PC-3 (cell line): ENCODE measurements at regions of chr10 and their contacts with region 1.

Region 1: DNA sequence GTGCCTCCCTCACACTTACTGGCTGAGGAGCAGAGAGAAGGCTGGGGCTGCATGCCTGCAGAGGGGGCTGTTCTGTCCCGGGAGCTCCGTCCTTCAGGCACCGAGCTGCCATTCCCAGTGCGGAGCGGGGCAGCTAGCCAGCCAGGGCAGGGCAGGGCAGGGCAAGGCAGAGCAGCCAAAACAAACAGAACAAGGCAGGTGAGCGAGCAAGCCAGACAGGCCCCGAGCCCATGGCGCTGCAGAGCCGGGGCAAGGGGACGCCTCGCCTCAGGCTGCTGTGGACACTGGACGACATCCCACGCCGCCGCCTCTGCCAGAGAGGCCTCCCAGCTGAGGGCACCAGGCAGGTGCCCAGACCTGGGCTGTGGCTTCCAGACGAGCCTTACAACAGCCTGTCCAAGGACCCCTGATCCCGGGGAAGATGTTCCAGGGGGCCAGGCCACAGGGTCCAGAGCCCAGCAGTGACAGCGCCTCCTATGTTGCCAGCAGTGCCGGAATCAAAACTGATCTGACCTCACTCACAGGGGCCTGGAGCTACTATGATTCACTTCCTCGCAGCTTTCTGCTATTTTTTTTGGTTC is 8.2 kb upstream of the NDST2 start:
- DNase-seq: peak; percentile 97
- ATAC-seq: peak; percentile 94
- H3K4me3 ChIP-seq: peak overlapping the region; percentile 33
- H3K27ac ChIP-seq: peak overlapping the region; percentile 66
- H3K4me1 ChIP-seq: peaks cover 22% of the 10 kb centered on the region
- H3K27me3 ChIP-seq: no peaks in the 10 kb centered on the region
- CTCF ChIP-seq: peak; percentile 89

Region 2: DNA sequence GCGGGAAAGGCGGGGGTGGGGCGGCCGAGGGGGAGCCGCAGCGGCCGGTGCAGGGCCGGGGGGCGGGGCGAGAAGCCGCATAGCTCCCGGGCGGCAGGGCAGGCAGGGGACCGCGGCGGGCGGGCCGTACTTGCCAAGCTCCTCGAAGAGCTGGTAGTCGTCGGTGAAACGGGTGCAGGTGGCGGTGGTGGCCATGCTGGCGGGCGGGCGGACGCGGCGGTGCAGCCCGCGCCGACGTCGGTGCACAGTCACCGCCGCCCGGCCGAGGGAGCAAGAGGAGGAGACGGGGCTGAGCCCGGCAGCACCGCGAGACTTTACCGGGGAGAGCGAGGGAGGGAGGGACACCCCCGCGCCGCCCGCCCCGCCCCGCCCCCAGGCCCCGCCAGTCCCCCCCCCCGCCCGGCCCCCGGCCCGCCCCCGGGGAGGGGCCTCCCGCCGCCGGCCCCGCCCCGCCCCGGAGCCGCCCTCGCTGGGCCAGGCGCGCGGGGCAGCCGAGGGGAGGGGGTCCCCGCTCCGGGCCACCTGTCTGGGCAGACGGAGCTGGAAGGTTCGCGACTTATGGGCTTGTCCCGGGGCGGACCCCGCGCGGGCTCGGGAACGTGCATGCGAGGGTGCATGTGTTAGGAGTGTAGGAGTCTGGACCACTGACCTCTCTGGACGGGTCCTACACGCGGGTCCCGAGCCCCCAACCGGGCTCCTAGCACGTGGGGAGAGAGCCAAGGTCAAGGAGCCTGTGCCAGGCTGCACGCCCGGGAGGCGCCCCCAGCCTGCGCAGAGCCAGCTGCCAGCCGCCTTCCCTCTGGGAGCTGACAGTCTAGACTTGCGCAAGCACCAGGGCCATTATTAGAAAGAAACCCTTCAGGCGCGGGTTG is 54.9 kb after region 1 on chr10 and contains the start of gene CAMK2G:
- CTCF ChIA-PET with region 1: interaction called, 32 read pairs
- POLR2A ChIA-PET with region 1: no interaction called
- intact Hi-C with region 1: loop called (anchors 2 kb)
- DNase-seq: peak; percentile 100
- ATAC-seq: peak; percentile 87
- H3K4me3 ChIP-seq: peak within 1 kb of the TSS; percentile 68
- H3K27ac ChIP-seq: no peak within 1 kb of the TSS
- H3K4me1 ChIP-seq: peaks cover 48% of the 10 kb centered on the region
- H3K27me3 ChIP-seq: no peaks in the 10 kb centered on the region
- CTCF ChIP-seq: no peak
- total RNA-seq, gene CAMK2G: 170 and 179 TPM in 2 replicates

Region 3: DNA sequence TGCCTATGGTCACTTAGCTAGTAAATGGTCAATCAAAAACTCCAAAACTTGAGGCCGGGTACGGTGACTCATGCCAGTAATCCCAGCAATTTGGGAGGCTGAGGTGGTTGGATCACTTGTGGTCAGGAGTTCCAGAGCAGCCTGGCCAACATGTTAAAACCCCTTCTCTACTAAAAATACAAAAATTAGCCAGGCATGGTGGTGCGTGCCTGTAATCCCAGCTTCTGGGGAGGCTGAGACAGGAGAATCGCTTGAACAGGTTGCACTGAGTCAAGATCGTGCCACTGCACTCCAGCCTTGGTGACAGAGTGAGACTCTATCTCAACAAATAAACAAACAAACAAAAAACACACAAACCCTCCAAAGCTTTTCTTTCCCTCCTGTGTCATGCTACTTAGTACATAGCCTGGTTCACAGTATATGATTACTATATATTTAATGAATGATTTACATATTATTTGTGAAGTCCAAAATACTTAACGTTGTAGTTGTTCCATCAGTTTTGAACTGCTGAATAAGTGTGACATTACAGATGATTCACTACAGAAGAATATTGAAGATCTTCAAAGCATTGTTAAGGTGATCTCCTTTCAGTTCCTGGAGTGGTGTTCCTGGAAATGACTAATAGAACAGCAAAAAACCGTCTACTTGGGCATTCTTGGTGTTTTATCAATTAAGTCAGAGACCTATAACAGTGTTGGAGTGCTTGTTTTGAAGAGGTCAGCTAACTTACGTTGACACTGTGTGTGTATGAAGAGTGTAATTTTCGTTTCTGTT is 404.3 kb after region 1 on chr10:
- CTCF ChIA-PET with region 1: no interaction called
- POLR2A ChIA-PET with region 1: no interaction called
- intact Hi-C with region 1: no loop called
- DNase-seq: peak; percentile 99
- ATAC-seq: peak; percentile 88
- H3K4me3 ChIP-seq: peak overlapping the region; percentile 6; the same call in 1 of the 2 replicates
- H3K27ac ChIP-seq: peak overlapping the region; percentile 46
- H3K4me1 ChIP-seq: peaks cover 45% of the 10 kb centered on the region
- H3K27me3 ChIP-seq: no peaks in the 10 kb centered on the region
- CTCF ChIP-seq: no peak